GM12878 (cell line): ENCODE measurements at regions of chr1 and their contacts with region 1.

Region 1: GRCh38 chr1:160291248-160292220 is 6.6 kb upstream of the PEX19 start:
- DNase-seq: peak; percentile 45
- ATAC-seq: peak; percentile 99
- H3K4me3 ChIP-seq: no peak overlapping the region
- H3K27ac ChIP-seq: no peak overlapping the region
- H3K4me1 ChIP-seq: no peaks in the 10 kb centered on the region
- H3K27me3 ChIP-seq: no peaks in the 10 kb centered on the region
- CTCF ChIP-seq: peak; percentile 74 to 84 (median 80)
- EP300 ChIP-seq: no peak
- POLR2A ChIP-seq: no peak
- RAD21 ChIP-seq: peak; percentile 67

Region 2: GRCh38 chr1:160108888-160109662 is 182.5 kb before region 1 on chr1:
- CTCF ChIA-PET with region 1: interaction called, 165 read pairs
- POLR2A ChIA-PET with region 1: no interaction called
- RAD21 ChIA-PET with region 1: no interaction called
- SMC1A ChIA-PET with region 1: interaction called, 46 read pairs
- in situ Hi-C with region 1: no loop called
- intact Hi-C with region 1: no loop called
- DNase-seq: no peak
- ATAC-seq: peak; percentile 70
- H3K4me3 ChIP-seq: no peak overlapping the region
- H3K27ac ChIP-seq: no peak overlapping the region
- H3K4me1 ChIP-seq: no peaks in the 10 kb centered on the region
- H3K27me3 ChIP-seq: no peaks in the 10 kb centered on the region; a peak in 1 of 4 replicates
- CTCF ChIP-seq: peak; percentile 38 to 72 (median 58)
- EP300 ChIP-seq: no peak
- POLR2A ChIP-seq: no peak
- RAD21 ChIP-seq: no peak; the same call in 1 of the 2 replicates

Region 3: DNA sequence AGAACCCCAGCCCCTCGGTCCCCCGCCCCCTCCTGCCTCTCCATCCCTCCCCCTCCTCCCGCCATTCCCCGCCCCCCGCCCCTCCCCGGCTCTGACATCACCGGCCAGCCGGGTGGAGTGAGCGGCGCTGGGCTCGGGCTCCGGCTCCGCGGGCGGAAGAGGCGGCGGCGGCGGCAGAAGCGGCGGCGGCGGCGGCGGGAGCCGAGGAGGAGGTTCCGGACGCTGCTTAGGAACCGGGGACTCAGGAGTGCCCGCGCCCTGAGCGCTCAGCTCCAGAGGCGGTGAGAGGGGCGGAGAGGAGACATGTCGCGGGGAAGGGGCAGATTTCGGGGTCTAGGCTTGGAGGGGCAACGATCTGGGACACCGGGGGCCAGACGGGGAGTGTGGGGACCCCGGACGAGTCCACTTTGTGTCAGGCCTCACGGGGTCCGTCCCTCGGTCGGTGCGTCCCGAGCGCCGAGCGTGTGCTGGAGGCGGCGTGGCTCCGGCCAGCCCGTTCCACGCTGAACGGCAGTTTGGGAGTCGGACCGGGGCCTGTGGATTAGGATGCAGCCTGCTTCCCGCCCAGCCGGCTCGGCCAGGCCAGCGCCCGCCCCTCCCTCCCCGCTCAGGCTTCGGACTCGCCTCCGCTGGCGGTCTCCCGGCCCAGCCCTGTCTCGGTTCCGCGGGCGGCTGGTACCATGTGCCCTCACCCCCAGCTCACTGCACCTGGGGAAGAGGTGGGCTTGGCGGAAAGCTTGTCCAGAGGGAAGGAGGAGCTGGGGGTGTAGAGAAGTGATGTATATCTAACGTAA is 86.1 kb before region 1 on chr1 and contains the start of gene PEA15:
- CTCF ChIA-PET with region 1: interaction called, 32 read pairs
- POLR2A ChIA-PET with region 1: interaction called, 3 read pairs
- RAD21 ChIA-PET with region 1: interaction called, 9 read pairs
- SMC1A ChIA-PET with region 1: interaction called, 21 read pairs
- in situ Hi-C with region 1: no loop called
- intact Hi-C with region 1: no loop called
- DNase-seq: no peak
- ATAC-seq: peak; percentile 76
- H3K4me3 ChIP-seq: peak within 1 kb of the TSS; percentile 99
- H3K27ac ChIP-seq: peak within 1 kb of the TSS; percentile 96
- H3K4me1 ChIP-seq: peaks cover 26% of the 10 kb centered on the region
- H3K27me3 ChIP-seq: no peaks in the 10 kb centered on the region
- CTCF ChIP-seq: no peak
- EP300 ChIP-seq: no peak
- POLR2A ChIP-seq: peak; percentile 66; the same call in 1 of the 2 replicates
- RAD21 ChIP-seq: no peak
- polyA plus RNA-seq, gene PEA15: 15.1 to 28.2 TPM

Region 4: DNA sequence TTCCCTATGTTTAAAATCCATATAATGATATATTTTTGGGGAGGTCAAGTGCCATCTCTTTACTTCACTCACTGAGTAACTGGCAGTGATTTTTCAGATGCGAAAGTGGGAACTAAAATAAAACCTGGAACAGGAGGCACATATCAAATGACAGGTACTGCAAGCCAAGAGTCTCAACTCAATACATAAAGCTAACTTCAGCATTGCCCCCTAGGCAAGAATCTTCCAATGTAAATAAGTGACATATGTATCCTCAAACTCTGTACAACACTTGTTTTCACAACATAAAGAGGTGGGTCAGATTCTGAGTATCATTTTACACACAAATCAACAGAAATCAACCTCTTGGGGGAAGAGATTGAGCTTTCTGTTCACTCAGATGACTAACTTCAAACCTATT is 47.3 kb before region 1 on chr1:
- CTCF ChIA-PET with region 1: interaction called, 141 read pairs
- POLR2A ChIA-PET with region 1: no interaction called
- RAD21 ChIA-PET with region 1: interaction called, 7 read pairs
- SMC1A ChIA-PET with region 1: interaction called, 98 read pairs
- in situ Hi-C with region 1: no loop called
- intact Hi-C with region 1: no loop called
- DNase-seq: no peak
- ATAC-seq: no peak
- H3K4me3 ChIP-seq: no peak overlapping the region
- H3K27ac ChIP-seq: no peak overlapping the region
- H3K4me1 ChIP-seq: no peaks in the 10 kb centered on the region
- H3K27me3 ChIP-seq: no peaks in the 10 kb centered on the region
- CTCF ChIP-seq: no peak
- EP300 ChIP-seq: no peak
- POLR2A ChIP-seq: no peak
- RAD21 ChIP-seq: no peak

Region 5: DNA sequence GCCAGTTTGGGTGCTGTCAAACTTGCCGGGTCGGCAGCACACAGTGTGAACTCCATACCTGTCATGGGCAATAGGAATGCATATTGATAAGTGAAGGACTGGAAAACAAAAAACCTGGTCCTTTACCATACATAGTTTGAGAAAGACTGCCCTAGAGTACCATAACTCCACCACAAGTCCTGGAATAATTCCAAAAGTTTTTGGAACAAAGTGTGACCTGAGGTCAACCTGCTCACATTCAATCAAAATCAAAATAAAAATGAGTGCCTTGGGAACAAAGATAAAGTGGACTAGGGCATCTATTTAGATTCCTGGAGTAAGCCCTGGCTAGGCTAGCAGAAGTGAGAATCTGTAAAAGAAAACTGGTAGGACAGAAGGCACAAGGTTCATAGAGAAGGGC is 14.2 kb before region 1 on chr1:
- CTCF ChIA-PET with region 1: interaction called, 44 read pairs
- POLR2A ChIA-PET with region 1: interaction called, 5 read pairs
- RAD21 ChIA-PET with region 1: interaction called, 5 read pairs
- SMC1A ChIA-PET with region 1: interaction called, 6 read pairs
- in situ Hi-C with region 1: no loop called
- intact Hi-C with region 1: no loop called
- DNase-seq: no peak
- ATAC-seq: no peak
- H3K4me3 ChIP-seq: no peak overlapping the region
- H3K27ac ChIP-seq: no peak overlapping the region
- H3K4me1 ChIP-seq: no peaks in the 10 kb centered on the region
- H3K27me3 ChIP-seq: no peaks in the 10 kb centered on the region
- CTCF ChIP-seq: no peak
- EP300 ChIP-seq: no peak
- POLR2A ChIP-seq: no peak
- RAD21 ChIP-seq: no peak

Region 6: GRCh38 chr1:160342953-160343869 is 51.7 kb after region 1 on chr1 and contains the starts of genes COPA and NCSTN:
- CTCF ChIA-PET with region 1: interaction called, 15 read pairs
- POLR2A ChIA-PET with region 1: no interaction called
- RAD21 ChIA-PET with region 1: interaction called, 3 read pairs
- SMC1A ChIA-PET with region 1: interaction called, 4 read pairs
- in situ Hi-C with region 1: no loop called
- intact Hi-C with region 1: no loop called
- DNase-seq: peak; percentile 75
- ATAC-seq: peak; percentile 90
- H3K4me3 ChIP-seq: peak within 1 kb of the TSS; percentile 96
- H3K27ac ChIP-seq: peak within 1 kb of the TSS; percentile 97
- H3K4me1 ChIP-seq: peaks cover 23% of the 10 kb centered on the region
- H3K27me3 ChIP-seq: no peaks in the 10 kb centered on the region
- CTCF ChIP-seq: no peak
- EP300 ChIP-seq: no peak
- POLR2A ChIP-seq: peak; percentile 96
- RAD21 ChIP-seq: no peak
- polyA plus RNA-seq, gene COPA: 53.7 to 70.6 TPM
- polyA plus RNA-seq, gene NCSTN: 33.3 to 41.6 TPM